Mammary epithelial cell (primary cell): ENCODE measurements at regions of chr3 and their contacts with region 1.

Region 1: GRCh38 chr3:45656575-45657363 is 32.4 kb upstream of the SACM1L start:
- DNase-seq: peak; percentile 91
- H3K4me3 ChIP-seq: no peak overlapping the region
- H3K27ac ChIP-seq: no peak overlapping the region
- H3K4me1 ChIP-seq: peaks cover 9% of the 10 kb centered on the region
- H3K27me3 ChIP-seq: no peaks in the 10 kb centered on the region
- CTCF ChIP-seq: peak; percentile 90 to 97

Region 2: GRCh38 chr3:45224824-45225464 is 431.8 kb before region 1 on chr3:
- CTCF ChIA-PET with region 1: no interaction called
- dilution Hi-C with region 1: no loop called
- in situ Hi-C with region 1: loop called (anchors 25 kb)
- intact Hi-C with region 1: loop called (anchors 2 kb)
- DNase-seq: peak; percentile 55
- H3K4me3 ChIP-seq: peak overlapping the region; percentile 37 to 69 (median 58)
- H3K27ac ChIP-seq: no peak overlapping the region
- H3K4me1 ChIP-seq: peaks cover 12% of the 10 kb centered on the region
- H3K27me3 ChIP-seq: no peaks in the 10 kb centered on the region
- CTCF ChIP-seq: peak; percentile 36 to 61

Region 3: GRCh38 chr3:45406772-45407171 is 250.0 kb before region 1 on chr3:
- CTCF ChIA-PET with region 1: no interaction called
- dilution Hi-C with region 1: no loop called
- in situ Hi-C with region 1: no loop called
- intact Hi-C with region 1: no loop called
- DNase-seq: no peak
- H3K4me3 ChIP-seq: no peak overlapping the region
- H3K27ac ChIP-seq: no peak overlapping the region
- H3K4me1 ChIP-seq: no peaks in the 10 kb centered on the region
- H3K27me3 ChIP-seq: no peaks in the 10 kb centered on the region
- CTCF ChIP-seq: no peak

Region 4: GRCh38 chr3:45473841-45474240 is 182.9 kb before region 1 on chr3:
- CTCF ChIA-PET with region 1: no interaction called
- dilution Hi-C with region 1: no loop called
- in situ Hi-C with region 1: no loop called
- intact Hi-C with region 1: no loop called
- DNase-seq: no peak
- H3K4me3 ChIP-seq: no peak overlapping the region
- H3K27ac ChIP-seq: no peak overlapping the region
- H3K4me1 ChIP-seq: peaks cover 1% of the 10 kb centered on the region
- H3K27me3 ChIP-seq: no peaks in the 10 kb centered on the region
- CTCF ChIP-seq: no peak

Region 5: GRCh38 chr3:45516829-45517228 is 139.9 kb before region 1 on chr3:
- CTCF ChIA-PET with region 1: no interaction called
- dilution Hi-C with region 1: loop called (anchors 5 kb)
- in situ Hi-C with region 1: loop called (anchors 5 kb)
- intact Hi-C with region 1: no loop called
- DNase-seq: no peak
- H3K4me3 ChIP-seq: no peak overlapping the region
- H3K27ac ChIP-seq: no peak overlapping the region
- H3K4me1 ChIP-seq: no peaks in the 10 kb centered on the region
- H3K27me3 ChIP-seq: no peaks in the 10 kb centered on the region
- CTCF ChIP-seq: no peak

Region 6: DNA sequence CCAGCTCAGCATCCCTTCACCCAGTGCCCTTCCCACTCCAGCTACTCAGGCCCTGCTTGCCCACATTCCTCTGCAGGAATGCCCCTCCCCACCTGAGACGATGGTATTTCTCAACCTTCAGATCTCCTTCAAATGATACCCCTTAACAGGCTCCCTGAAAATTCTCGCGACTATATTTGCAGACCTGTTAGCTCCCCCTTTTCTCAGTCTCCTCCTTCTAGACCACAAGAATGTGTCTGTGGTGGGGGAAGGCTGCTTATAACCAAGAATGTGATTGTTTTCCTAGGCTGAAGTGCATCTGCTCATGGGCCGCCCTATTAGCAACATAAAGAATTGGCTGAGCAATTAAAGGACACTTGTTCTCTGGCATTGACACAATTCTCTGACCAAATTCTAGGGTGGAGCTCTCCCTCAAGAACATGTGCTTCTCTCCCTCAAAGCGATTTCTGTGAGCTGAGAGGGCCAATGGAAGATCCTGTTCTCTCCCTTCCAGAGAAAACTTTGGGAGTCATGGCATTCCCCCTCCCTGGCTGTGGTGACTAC is 81.3 kb before region 1 on chr3:
- CTCF ChIA-PET with region 1: interaction called, 38 read pairs
- dilution Hi-C with region 1: no loop called
- in situ Hi-C with region 1: no loop called
- intact Hi-C with region 1: no loop called
- DNase-seq: peak; percentile 83
- H3K4me3 ChIP-seq: no peak overlapping the region
- H3K27ac ChIP-seq: no peak overlapping the region
- H3K4me1 ChIP-seq: peaks cover 26% of the 10 kb centered on the region
- H3K27me3 ChIP-seq: no peaks in the 10 kb centered on the region
- CTCF ChIP-seq: no peak

Region 7: GRCh38 chr3:45593708-45594609 is 62.8 kb before region 1 on chr3:
- CTCF ChIA-PET with region 1: interaction called, 7 read pairs
- dilution Hi-C with region 1: loop called (anchors 5 kb)
- in situ Hi-C with region 1: loop called (anchors 5 to 10 kb)
- intact Hi-C with region 1: loop called (anchors 1 kb)
- DNase-seq: peak; percentile 70
- H3K4me3 ChIP-seq: peak overlapping the region; percentile 45 to 56 (median 54)
- H3K27ac ChIP-seq: peak overlapping the region; percentile 63
- H3K4me1 ChIP-seq: peaks cover 42% of the 10 kb centered on the region
- H3K27me3 ChIP-seq: no peaks in the 10 kb centered on the region
- CTCF ChIP-seq: no peak

Region 8: DNA sequence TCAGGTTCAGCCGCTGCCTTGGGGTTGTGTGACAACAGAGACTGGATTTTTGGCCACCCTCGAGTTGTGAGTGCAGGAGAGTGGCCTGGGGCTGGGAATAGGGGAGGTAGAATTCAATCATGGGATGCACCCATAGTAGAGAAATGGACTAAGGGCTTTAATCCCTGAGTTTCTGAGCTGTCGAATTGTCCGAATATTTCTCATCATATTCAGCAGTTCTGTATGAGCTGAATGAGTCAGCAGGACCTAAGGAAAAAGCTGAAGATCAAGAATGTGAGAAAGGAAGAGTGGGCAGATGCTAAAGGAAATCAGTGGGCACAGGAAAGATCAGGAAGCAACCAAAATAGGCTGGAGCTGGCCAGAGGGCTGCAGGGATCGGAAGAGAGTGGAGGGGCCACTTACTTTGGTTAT is 12.0 kb before region 1 on chr3:
- CTCF ChIA-PET with region 1: interaction called, 22 read pairs
- dilution Hi-C with region 1: no loop called
- in situ Hi-C with region 1: no loop called
- intact Hi-C with region 1: no loop called
- DNase-seq: peak; percentile 78
- H3K4me3 ChIP-seq: no peak overlapping the region
- H3K27ac ChIP-seq: peak overlapping the region; percentile 66
- H3K4me1 ChIP-seq: peaks cover 48% of the 10 kb centered on the region
- H3K27me3 ChIP-seq: no peaks in the 10 kb centered on the region
- CTCF ChIP-seq: no peak

Region 9: GRCh38 chr3:45712472-45713110 is 55.8 kb after region 1 on chr3:
- CTCF ChIA-PET with region 1: interaction called, 49 read pairs
- dilution Hi-C with region 1: no loop called
- in situ Hi-C with region 1: no loop called
- intact Hi-C with region 1: no loop called
- DNase-seq: no peak
- H3K4me3 ChIP-seq: no peak overlapping the region
- H3K27ac ChIP-seq: no peak overlapping the region
- H3K4me1 ChIP-seq: no peaks in the 10 kb centered on the region
- H3K27me3 ChIP-seq: no peaks in the 10 kb centered on the region
- CTCF ChIP-seq: no peak